ENCODE measurements at regions of chr17 and their contacts with region 1.

Region 1: DNA sequence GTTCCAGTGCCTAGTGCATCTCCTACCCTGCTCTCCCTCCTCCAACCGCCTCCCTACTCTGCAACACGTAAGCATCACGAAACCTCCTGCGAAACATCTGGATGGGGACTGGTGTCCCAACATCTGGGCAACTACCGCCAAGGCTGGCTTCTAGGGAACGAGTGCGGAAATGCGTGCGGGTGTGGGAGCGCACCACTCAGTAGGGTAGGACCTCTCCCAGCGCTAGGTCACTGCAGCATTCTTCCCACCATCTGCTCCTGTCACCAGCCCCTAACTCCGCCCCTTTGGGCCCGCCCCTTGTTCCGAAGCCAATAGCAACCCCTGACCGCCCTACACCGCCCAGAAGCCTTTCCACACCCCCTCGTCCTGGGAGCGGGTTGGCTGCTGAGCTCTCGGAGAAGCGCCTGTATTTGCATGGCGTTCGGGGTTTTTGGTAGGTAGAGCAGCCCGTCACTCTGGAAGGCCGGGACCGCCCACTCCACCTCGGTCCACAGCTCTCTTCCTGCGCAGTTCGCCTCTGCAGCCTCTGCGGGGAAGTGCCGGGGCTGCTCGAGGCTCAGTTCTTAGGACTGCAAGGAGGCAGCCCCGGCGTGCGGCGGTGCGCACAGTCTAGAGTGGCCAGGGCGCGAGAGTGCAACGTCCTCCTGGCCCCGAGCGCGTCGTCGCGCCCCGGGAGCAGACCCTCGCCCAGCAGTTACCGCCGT is at the start of gene HS3ST3B1:
- DNase-seq: peak; percentile 98
- H3K4me3 ChIP-seq: peak within 1 kb of the TSS; percentile 48 to 87 (median 75)
- H3K27ac ChIP-seq: no peak within 1 kb of the TSS
- H3K4me1 ChIP-seq: peaks cover 4 to 42% (median 22%) of the 10 kb centered on the region in 4 experiments
- H3K27me3 ChIP-seq: peaks cover 25 to 84% (median 73%) of the 10 kb centered on the region in 4 experiments
- CTCF ChIP-seq: no peak
- EP300 ChIP-seq: no peak
- POLR2A ChIP-seq: peak in 1 of 2 experiments; percentile 80; a peak in 2 of 3 replicates
- RAD21 ChIP-seq: peak; percentile 3 to 24; a peak in 2 of 4 replicates
- total RNA-seq, gene HS3ST3B1: 14.0 and 14.4 TPM in 2 replicates

Region 2: DNA sequence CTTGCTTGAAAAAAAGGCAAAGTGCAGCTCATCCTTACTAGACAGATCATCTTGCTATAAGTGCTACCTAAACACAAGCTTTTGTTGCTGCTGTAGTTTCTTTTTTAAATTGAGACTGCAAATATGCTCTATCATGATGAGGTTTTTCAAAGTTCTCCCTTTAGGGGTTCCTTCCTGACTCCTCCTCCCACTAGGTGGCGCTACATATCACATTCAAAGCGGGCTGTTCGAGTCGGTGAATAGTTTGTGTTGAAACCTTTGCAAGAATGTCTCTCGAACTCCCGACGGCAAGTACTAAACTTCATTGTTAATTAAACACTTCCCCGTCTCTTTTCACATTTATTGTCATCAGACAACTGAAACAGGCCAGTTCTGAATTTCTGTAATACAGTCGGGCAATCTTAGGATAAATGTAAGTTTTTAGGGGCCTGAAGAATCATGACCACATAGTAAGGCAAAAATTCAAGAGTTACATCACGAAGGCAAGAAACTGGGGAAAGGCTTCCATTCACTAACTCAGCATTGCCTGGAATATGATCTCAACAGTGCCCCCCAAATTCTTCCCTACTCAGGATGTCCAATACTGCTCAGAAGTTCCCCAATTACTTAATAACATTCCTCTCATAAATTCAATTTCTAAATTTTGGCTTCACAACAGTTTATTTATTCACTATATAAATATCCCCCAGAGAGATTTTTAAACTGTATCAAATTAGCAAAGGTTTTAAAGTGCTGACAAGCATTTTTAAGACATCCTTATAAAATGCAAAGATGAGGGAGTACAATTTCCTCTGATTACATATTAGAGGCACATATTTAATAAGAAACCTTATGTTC is 705.7 kb before region 1 on chr17:
- CTCF ChIA-PET with region 1: interaction called, 11 read pairs
- POLR2A ChIA-PET with region 1: no interaction called
- DNase-seq: peak; percentile 31 to 80
- H3K4me3 ChIP-seq: peak overlapping the region in 1 of 4 experiments; percentile 25; a peak in 1 of 8 replicates
- H3K27ac ChIP-seq: no peak overlapping the region
- H3K4me1 ChIP-seq: no peaks in the 10 kb centered on the region; a peak in 2 of 7 replicates
- H3K27me3 ChIP-seq: peaks cover 0 to 4% (median 1%) of the 10 kb centered on the region in 4 experiments; a peak in 4 of 7 replicates
- CTCF ChIP-seq: peak; percentile 34 to 80 (median 75)
- EP300 ChIP-seq: no peak
- POLR2A ChIP-seq: no peak
- RAD21 ChIP-seq: peak; percentile 70 to 79

Region 3: GRCh38 chr17:14228903-14229302 is 71.8 kb before region 1 on chr17:
- CTCF ChIA-PET with region 1: no interaction called
- POLR2A ChIA-PET with region 1: no interaction called
- DNase-seq: no peak
- H3K4me3 ChIP-seq: no peak overlapping the region
- H3K27ac ChIP-seq: no peak overlapping the region
- H3K4me1 ChIP-seq: no peaks in the 10 kb centered on the region
- H3K27me3 ChIP-seq: no peaks in the 10 kb centered on the region
- CTCF ChIP-seq: no peak
- EP300 ChIP-seq: no peak
- POLR2A ChIP-seq: no peak
- RAD21 ChIP-seq: no peak

Region 4: DNA sequence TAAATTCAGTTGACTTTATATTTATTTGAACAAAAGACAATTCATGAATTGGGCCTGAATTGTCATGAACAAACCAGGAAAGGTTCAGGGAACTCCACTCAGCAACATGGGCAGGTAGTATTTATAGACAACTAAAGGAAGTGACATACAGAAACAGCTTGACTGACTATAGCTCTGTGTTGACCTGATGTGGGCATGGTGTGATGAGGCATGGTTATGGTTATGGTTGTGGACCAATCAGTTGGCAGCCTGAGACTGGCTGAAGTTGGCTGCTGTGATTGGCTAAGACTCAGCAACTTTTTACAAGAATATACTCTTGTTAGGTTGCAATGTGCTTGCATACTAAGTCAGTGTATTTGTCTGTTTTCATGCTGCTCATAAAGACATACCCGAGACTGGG is 108.6 kb after region 1 on chr17:
- CTCF ChIA-PET with region 1: no interaction called
- POLR2A ChIA-PET with region 1: no interaction called
- DNase-seq: no peak
- H3K4me3 ChIP-seq: no peak overlapping the region
- H3K27ac ChIP-seq: no peak overlapping the region
- H3K4me1 ChIP-seq: no peaks in the 10 kb centered on the region
- H3K27me3 ChIP-seq: no peaks in the 10 kb centered on the region
- CTCF ChIP-seq: no peak
- EP300 ChIP-seq: no peak
- POLR2A ChIP-seq: no peak
- RAD21 ChIP-seq: no peak

Region 5: GRCh38 chr17:14553855-14554254 is 253.1 kb after region 1 on chr17:
- CTCF ChIA-PET with region 1: interaction called, 11 read pairs
- POLR2A ChIA-PET with region 1: no interaction called
- DNase-seq: no peak
- H3K4me3 ChIP-seq: no peak overlapping the region
- H3K27ac ChIP-seq: no peak overlapping the region
- H3K4me1 ChIP-seq: peaks cover 0 to 6% (median 0%) of the 10 kb centered on the region in 4 experiments; a peak in 3 of 7 replicates
- H3K27me3 ChIP-seq: no peaks in the 10 kb centered on the region
- CTCF ChIP-seq: peak in 2 of 3 experiments; percentile 31 to 51; a peak in 2 of 4 replicates
- EP300 ChIP-seq: no peak
- POLR2A ChIP-seq: no peak
- RAD21 ChIP-seq: peak; percentile 68 to 81

Region 6: DNA sequence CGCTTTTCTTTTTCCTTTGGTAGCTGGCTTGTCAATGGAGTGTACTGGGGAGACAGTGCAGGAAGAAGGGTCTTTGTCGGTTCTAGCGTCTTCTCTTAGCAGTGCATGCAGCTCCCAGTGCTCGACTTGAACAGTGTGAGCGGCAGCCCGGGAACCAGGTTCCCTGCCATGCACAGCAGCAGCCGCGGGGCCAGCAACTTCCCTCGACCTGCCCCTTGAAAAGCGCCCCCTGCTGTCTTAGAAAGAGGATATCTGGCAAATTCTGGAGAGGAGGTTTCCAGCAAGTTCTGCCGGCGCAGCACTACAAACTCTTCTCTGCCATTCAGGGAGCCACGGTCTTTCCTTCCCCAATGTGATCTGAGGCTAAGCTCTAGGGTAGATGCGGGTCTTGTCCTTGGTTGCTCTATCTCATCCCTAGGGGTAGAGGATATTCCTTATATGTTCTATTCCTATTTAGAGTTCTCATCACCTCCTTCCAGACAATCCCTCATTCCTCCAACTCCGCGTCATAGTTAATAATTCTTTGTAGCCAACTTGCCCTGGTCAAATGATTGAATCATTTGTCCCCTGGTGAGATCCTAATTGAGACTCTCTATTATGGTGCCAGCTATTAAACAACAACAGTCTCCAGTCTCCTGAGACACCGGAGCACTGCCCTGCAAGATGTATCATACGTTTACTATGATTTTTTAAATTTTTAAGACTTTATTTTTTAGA is 513.1 kb after region 1 on chr17:
- CTCF ChIA-PET with region 1: interaction called, 15 read pairs
- POLR2A ChIA-PET with region 1: no interaction called
- DNase-seq: peak; percentile 73 to 82
- H3K4me3 ChIP-seq: no peak overlapping the region
- H3K27ac ChIP-seq: no peak overlapping the region
- H3K4me1 ChIP-seq: no peaks in the 10 kb centered on the region
- H3K27me3 ChIP-seq: no peaks in the 10 kb centered on the region
- CTCF ChIP-seq: peak; percentile 61 to 71 (median 62)
- EP300 ChIP-seq: no peak
- POLR2A ChIP-seq: no peak
- RAD21 ChIP-seq: peak; percentile 65 to 76